ENCODE measurements at regions of chr13 and their contacts with region 1.

Region 1: DNA sequence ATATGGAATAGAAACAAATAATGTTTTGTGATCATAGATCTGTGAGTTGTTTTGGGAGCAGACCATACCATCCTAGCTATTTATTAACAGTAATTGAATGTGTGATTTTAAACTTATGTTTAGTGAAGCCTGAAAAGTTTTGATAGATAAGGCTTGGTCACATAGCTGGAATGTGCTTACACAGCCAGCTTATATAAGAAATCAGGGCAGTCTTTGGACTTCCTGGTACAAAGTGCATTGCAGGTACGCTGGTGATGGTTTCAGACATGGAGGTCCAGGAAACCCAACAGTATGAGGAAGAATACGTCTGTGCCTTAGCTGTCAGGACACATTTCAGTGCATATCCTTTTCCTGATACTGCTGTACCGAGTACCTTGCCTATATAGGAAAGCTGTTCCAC is 2316.2 kb upstream of the PCDH20 start:
- DNase-seq: no peak
- ATAC-seq: no peak
- H3K4me3 ChIP-seq: no peak overlapping the region
- H3K27ac ChIP-seq: no peak overlapping the region
- H3K4me1 ChIP-seq: no peaks in the 10 kb centered on the region
- H3K27me3 ChIP-seq: no peaks in the 10 kb centered on the region
- CTCF ChIP-seq: no peak
- POLR2A ChIP-seq: no peak
- RAD21 ChIP-seq: no peak

Region 2: GRCh38 chr13:63773476-63773875 is 41.6 kb after region 1 on chr13:
- CTCF ChIA-PET with region 1: no interaction called
- POLR2A ChIA-PET with region 1: no interaction called
- dilution Hi-C with region 1: no loop called
- in situ Hi-C with region 1: no loop called
- intact Hi-C with region 1: loop called (anchors 10 kb)
- DNase-seq: no peak
- ATAC-seq: no peak
- H3K4me3 ChIP-seq: no peak overlapping the region
- H3K27ac ChIP-seq: no peak overlapping the region
- H3K4me1 ChIP-seq: no peaks in the 10 kb centered on the region
- H3K27me3 ChIP-seq: no peaks in the 10 kb centered on the region
- CTCF ChIP-seq: no peak
- POLR2A ChIP-seq: no peak
- RAD21 ChIP-seq: no peak

Region 3: DNA sequence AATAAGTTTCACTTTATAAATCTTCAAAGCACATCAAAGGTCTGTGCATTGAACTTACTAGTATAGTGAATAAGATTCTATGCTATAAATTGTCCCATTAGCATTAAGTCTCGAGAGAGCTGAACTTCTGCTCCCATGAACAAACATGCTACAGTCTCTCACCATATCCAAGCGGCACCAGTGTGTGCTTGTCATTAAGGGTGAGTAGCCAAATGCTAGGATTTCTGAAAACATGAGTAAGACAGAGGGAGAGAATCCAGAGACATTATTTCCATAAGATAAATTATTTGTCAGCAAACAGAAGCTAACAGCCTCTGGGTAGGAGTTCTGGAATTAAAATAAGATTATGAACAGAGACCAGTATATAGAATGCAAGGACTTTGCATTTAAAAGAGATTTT is 615.8 kb after region 1 on chr13:
- CTCF ChIA-PET with region 1: no interaction called
- POLR2A ChIA-PET with region 1: no interaction called
- dilution Hi-C with region 1: no loop called
- in situ Hi-C with region 1: no loop called
- intact Hi-C with region 1: no loop called
- DNase-seq: peak; percentile 19
- ATAC-seq: no peak
- H3K4me3 ChIP-seq: no peak overlapping the region
- H3K27ac ChIP-seq: no peak overlapping the region
- H3K4me1 ChIP-seq: no peaks in the 10 kb centered on the region
- H3K27me3 ChIP-seq: no peaks in the 10 kb centered on the region
- CTCF ChIP-seq: no peak
- POLR2A ChIP-seq: no peak
- RAD21 ChIP-seq: no peak

Region 4: GRCh38 chr13:64648293-64648692 is 916.4 kb after region 1 on chr13:
- CTCF ChIA-PET with region 1: no interaction called
- POLR2A ChIA-PET with region 1: no interaction called
- dilution Hi-C with region 1: no loop called
- in situ Hi-C with region 1: no loop called
- intact Hi-C with region 1: no loop called
- DNase-seq: no peak
- ATAC-seq: no peak
- H3K4me3 ChIP-seq: no peak overlapping the region
- H3K27ac ChIP-seq: no peak overlapping the region
- H3K4me1 ChIP-seq: no peaks in the 10 kb centered on the region
- H3K27me3 ChIP-seq: no peaks in the 10 kb centered on the region
- CTCF ChIP-seq: no peak
- POLR2A ChIP-seq: no peak
- RAD21 ChIP-seq: no peak

Measured in IMR-90 (cell line).